GM12878 (cell line): ENCODE measurements at regions of chr9 and their contacts with region 1.

Region 1: DNA sequence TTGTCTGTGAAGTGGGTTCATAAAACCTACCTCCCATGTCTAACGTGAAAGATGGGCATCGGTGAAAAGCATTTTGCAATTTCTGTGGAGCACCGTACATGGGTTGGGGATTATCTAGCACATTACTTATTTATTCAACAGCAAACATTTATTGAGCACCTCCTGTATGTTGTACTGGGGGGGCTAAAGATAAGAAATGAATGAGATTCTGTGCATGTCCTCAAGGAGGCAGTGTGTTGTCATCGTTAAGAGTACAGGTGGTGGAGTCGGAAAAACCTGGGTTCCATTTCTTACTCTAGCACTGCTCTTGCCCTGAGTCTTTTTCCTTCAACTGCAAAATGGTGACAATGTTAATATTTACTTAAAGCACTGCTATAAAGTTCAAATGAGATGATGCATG is 30.4 kb upstream of the DENND1A start:
- DNase-seq: peak; percentile 21
- ATAC-seq: peak; percentile 79
- H3K4me3 ChIP-seq: no peak overlapping the region
- H3K27ac ChIP-seq: no peak overlapping the region
- H3K4me1 ChIP-seq: no peaks in the 10 kb centered on the region
- H3K27me3 ChIP-seq: peaks cover 3 to 4% of the 10 kb centered on the region in 2 experiments; a peak in 3 of 4 replicates
- CTCF ChIP-seq: peak; percentile 35 to 57 (median 48); a peak in 5 of 6 replicates
- EP300 ChIP-seq: no peak
- POLR2A ChIP-seq: no peak
- RAD21 ChIP-seq: peak; percentile 59

Region 2: GRCh38 chr9:123401879-123402513 is 558.4 kb before region 1 on chr9:
- CTCF ChIA-PET with region 1: no interaction called
- POLR2A ChIA-PET with region 1: no interaction called
- RAD21 ChIA-PET with region 1: no interaction called
- SMC1A ChIA-PET with region 1: no interaction called
- in situ Hi-C with region 1: no loop called
- intact Hi-C with region 1: loop called (anchors 10 kb)
- DNase-seq: no peak
- ATAC-seq: peak; percentile 83
- H3K4me3 ChIP-seq: no peak overlapping the region
- H3K27ac ChIP-seq: no peak overlapping the region
- H3K4me1 ChIP-seq: no peaks in the 10 kb centered on the region
- H3K27me3 ChIP-seq: no peaks in the 10 kb centered on the region
- CTCF ChIP-seq: peak; percentile 55 to 68 (median 62)
- EP300 ChIP-seq: no peak
- POLR2A ChIP-seq: no peak
- RAD21 ChIP-seq: peak; percentile 69

Region 3: GRCh38 chr9:123544007-123544827 is 416.1 kb before region 1 on chr9:
- CTCF ChIA-PET with region 1: interaction called, 6 read pairs
- POLR2A ChIA-PET with region 1: no interaction called
- RAD21 ChIA-PET with region 1: interaction called, 7 read pairs
- SMC1A ChIA-PET with region 1: interaction called, 5 read pairs
- in situ Hi-C with region 1: no loop called
- intact Hi-C with region 1: loop called (anchors 5 kb)
- DNase-seq: no peak
- ATAC-seq: peak; percentile 65
- H3K4me3 ChIP-seq: no peak overlapping the region
- H3K27ac ChIP-seq: no peak overlapping the region
- H3K4me1 ChIP-seq: no peaks in the 10 kb centered on the region
- H3K27me3 ChIP-seq: no peaks in the 10 kb centered on the region
- CTCF ChIP-seq: peak; percentile 68 to 89 (median 81)
- EP300 ChIP-seq: no peak
- POLR2A ChIP-seq: no peak
- RAD21 ChIP-seq: peak; percentile 98

Region 4: DNA sequence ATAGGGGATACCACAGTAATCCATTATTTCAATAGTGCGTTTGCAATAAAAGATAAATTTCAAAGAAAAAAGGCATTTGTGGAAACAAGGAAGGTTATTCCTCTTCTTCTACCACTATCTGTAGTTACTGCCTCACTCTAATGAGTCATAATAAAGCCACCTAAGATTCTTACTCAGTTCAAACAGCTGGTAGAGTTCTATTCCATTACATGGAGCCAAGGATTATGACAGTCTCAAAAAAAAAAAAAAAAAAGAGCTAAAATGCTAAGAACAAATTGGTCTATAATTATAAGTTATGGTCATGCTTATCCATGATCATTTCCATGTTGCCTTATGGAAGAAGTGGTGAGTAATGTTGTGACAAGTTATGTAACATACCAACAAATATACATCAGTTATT is 76.7 kb before region 1 on chr9:
- CTCF ChIA-PET with region 1: no interaction called
- POLR2A ChIA-PET with region 1: no interaction called
- RAD21 ChIA-PET with region 1: no interaction called
- SMC1A ChIA-PET with region 1: no interaction called
- in situ Hi-C with region 1: no loop called
- intact Hi-C with region 1: no loop called
- DNase-seq: no peak
- ATAC-seq: no peak
- H3K4me3 ChIP-seq: no peak overlapping the region
- H3K27ac ChIP-seq: no peak overlapping the region
- H3K4me1 ChIP-seq: peaks cover 6% of the 10 kb centered on the region
- H3K27me3 ChIP-seq: no peaks in the 10 kb centered on the region
- CTCF ChIP-seq: no peak
- EP300 ChIP-seq: no peak
- POLR2A ChIP-seq: no peak
- RAD21 ChIP-seq: no peak

Region 5: DNA sequence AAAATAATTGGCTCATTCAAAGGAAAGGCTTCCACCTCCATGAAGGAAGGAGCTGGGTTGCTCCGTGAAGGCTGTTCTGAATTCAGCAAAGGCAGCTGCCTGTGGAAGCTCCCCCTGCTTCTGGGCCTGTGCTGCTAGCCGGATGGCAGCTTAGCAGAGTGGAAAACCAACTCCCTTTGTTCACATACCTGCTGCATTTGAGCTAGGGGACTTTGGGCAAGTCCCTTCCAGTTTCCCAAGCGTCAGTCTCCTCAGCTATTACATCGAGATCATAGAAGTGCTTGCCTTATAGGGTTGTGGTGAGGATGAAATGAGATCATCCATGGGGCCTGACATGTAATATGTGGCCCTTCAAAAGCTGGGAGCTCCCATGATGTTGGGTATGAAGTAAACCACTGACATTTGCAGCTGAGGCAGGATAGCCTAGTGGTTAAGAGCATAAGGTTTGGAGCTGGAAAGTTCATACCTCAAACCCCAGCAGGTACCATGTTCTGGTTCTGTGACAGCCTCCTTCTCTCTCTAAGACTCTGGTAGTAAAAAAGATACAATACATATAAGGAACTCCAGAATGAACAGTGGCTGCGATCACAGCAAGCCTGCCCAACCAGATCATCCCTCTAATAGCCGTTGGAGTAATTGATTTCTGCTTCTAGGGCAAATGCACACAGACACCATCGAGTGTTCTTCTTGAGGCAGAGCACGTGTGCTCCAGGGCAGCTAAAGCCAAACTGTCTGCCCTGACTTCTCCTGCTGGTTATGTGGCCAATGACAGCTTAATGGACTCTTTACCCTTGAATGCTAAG is 19.4 kb before region 1 on chr9:
- CTCF ChIA-PET with region 1: interaction called, 9 read pairs
- POLR2A ChIA-PET with region 1: no interaction called
- RAD21 ChIA-PET with region 1: interaction called, 11 read pairs
- SMC1A ChIA-PET with region 1: interaction called, 6 read pairs
- in situ Hi-C with region 1: no loop called
- intact Hi-C with region 1: no loop called
- DNase-seq: peak; percentile 77
- ATAC-seq: peak; percentile 95
- H3K4me3 ChIP-seq: no peak overlapping the region
- H3K27ac ChIP-seq: no peak overlapping the region
- H3K4me1 ChIP-seq: no peaks in the 10 kb centered on the region
- H3K27me3 ChIP-seq: no peaks in the 10 kb centered on the region
- CTCF ChIP-seq: no peak
- EP300 ChIP-seq: peak; percentile 64 to 82; a peak in 2 of 4 replicates
- POLR2A ChIP-seq: no peak
- RAD21 ChIP-seq: no peak

Region 6: GRCh38 chr9:124006448-124007118 is 46.2 kb after region 1 on chr9:
- CTCF ChIA-PET with region 1: interaction called, 8 read pairs
- POLR2A ChIA-PET with region 1: interaction called, 3 read pairs
- RAD21 ChIA-PET with region 1: interaction called, 11 read pairs
- SMC1A ChIA-PET with region 1: interaction called, 13 read pairs
- in situ Hi-C with region 1: no loop called
- intact Hi-C with region 1: no loop called
- DNase-seq: no peak
- ATAC-seq: peak; percentile 62
- H3K4me3 ChIP-seq: no peak overlapping the region
- H3K27ac ChIP-seq: no peak overlapping the region
- H3K4me1 ChIP-seq: peaks cover 25% of the 10 kb centered on the region
- H3K27me3 ChIP-seq: peaks cover 0 to 54% of the 10 kb centered on the region in 2 experiments; a peak in 3 of 4 replicates
- CTCF ChIP-seq: no peak
- EP300 ChIP-seq: no peak; a peak in 1 of 4 replicates
- POLR2A ChIP-seq: no peak
- RAD21 ChIP-seq: no peak

Region 7: DNA sequence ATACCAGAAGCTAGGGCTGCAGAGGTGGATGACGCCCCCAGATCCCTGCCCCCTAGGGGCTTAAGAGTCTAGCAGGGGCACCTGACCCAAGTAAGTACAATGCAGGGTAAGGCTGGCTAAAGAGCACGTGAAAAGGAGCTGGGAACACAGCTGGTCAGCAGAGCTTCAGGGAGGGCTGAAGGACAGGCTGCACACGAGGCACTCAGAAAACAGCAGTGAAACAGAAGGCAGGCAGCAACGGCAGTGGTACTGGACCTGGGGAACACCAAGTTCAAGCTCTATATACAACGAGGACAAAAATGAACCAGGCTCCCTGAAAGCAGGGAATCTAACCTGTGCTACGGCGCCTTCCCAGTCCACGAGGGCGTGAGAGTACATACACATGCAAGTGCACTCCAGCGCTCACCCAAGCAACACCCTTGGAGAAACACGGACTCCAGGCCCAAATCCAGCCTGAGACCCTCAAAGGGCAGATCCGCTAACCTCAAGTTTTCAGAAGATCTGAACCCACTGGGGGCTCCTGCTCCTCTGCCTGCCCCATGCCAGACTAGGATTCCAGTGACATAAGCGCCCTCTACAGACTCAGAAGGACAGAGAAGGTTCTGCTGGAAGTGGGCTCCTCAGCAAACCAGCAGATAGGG is 397.5 kb after region 1 on chr9:
- CTCF ChIA-PET with region 1: no interaction called
- POLR2A ChIA-PET with region 1: no interaction called
- RAD21 ChIA-PET with region 1: no interaction called
- SMC1A ChIA-PET with region 1: no interaction called
- in situ Hi-C with region 1: no loop called
- intact Hi-C with region 1: loop called (anchors 10 kb)
- DNase-seq: no peak
- ATAC-seq: peak; percentile 20
- H3K4me3 ChIP-seq: no peak overlapping the region
- H3K27ac ChIP-seq: no peak overlapping the region
- H3K4me1 ChIP-seq: no peaks in the 10 kb centered on the region
- H3K27me3 ChIP-seq: no peaks in the 10 kb centered on the region
- CTCF ChIP-seq: peak in 2 of 3 experiments; percentile 22 to 30; a peak in 3 of 6 replicates
- EP300 ChIP-seq: no peak
- POLR2A ChIP-seq: peak; percentile 68; the same call in 1 of the 2 replicates
- RAD21 ChIP-seq: peak; percentile 33; the same call in 1 of the 2 replicates